ENCODE measurements at regions of chr16 and their contacts with region 1.

Region 1: GRCh38 chr16:57152096-57153093 is 33.4 kb downstream of the PSME3IP1 start:
- DNase-seq: no peak
- ATAC-seq: peak; percentile 72
- H3K4me3 Mint-ChIP-seq: no peak overlapping the region
- H3K27ac Mint-ChIP-seq: peak overlapping the region; percentile 78
- H3K4me1 Mint-ChIP-seq: peaks cover 15% of the 10 kb centered on the region
- H3K27me3 Mint-ChIP-seq: no peaks in the 10 kb centered on the region

Region 2: DNA sequence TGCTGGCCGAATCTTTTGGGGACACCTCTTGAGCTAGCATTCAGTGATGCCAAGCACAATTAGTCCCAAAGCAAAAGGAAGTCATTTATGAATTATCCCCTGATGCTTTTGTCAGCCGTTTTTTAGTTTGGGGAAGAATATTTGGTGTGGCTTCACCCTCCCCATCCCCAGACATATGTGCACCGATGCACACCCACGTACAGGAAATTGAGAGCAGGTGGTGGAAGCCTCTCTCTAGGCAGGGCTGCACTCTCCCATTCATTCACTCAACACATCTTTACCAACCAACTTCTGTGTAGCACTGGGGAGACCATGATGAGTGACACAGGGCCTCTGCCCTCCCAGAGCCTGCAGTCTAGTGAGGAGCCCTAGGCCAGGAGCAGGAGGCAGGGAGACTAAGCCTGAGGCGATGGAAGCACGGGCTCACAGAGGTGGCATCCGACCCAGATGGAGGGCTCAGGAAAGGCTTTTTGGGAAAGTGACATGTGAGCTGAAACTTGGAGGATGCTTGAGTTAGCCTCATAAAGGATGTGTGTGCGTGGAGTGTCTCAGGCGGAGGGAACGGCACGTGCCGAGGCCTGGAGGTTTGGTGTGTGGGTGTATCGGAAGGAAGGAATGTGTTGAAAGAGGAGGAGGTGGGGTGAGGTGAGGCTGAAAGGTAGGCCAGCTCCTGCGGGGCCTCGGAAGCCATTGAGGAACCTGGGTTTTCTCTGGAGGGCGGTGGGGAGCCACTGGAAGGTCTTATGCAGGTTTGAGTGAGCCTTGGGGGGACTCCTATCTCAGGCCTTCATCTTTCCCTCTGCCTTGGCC is 10.4 kb before region 1 on chr16:
- POLR2A ChIA-PET with region 1: interaction called, 13 read pairs
- DNase-seq: peak; percentile 35
- ATAC-seq: peak; percentile 80
- H3K4me3 Mint-ChIP-seq: peak overlapping the region; percentile 69
- H3K27ac Mint-ChIP-seq: peak overlapping the region; percentile 93
- H3K4me1 Mint-ChIP-seq: peaks cover 31% of the 10 kb centered on the region
- H3K27me3 Mint-ChIP-seq: no peaks in the 10 kb centered on the region

Measured in activated naive CD8-positive, alpha-beta T cell treated with anti-CD3 and anti-CD28 coated beads, Interleukin-2, amount 10 ng/mL, durations not matched to agents 7 days and 5 days (primary cell).